Activated naive CD8-positive, alpha-beta T cell treated with anti-CD3 and anti-CD28 coated beads, Interleukin-2, amount 10 ng/mL, durations not matched to agents 7 days and 5 days (primary cell): ENCODE measurements at regions of chr1 and their contacts with region 1.

Region 1: DNA sequence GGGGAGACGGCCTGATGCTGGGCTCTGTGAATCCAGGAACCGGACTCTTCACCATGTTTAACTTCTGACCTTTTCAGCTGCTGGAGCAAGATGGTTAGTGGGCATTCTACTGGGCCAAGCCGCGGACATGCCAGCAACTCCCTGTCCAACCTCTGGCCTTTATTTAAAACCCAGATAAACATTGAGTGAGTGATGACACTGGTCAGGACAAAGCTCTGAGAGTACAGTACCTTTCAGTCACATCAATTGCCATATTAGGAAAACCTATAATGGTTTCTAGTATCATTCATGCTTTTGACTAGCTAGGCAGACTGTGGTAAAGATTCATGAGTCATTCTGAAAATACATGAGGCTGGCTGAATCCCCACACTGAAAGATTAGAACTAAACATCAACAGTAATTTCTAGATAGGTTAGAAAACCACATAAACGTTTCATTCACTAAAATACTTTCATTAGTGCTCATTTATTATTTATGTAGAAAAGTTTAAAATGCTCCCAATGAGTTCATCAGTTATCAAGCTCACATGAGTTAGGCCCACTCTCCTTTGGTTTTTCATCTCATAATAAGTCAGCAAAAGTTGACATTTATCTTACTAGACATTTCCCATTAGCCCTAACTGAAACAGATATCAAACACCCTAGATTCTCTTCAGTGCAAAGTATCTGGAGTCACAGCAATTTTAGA is 7.1 kb upstream of the ACTA1 start:
- DNase-seq: no peak
- ATAC-seq: peak; percentile 94
- H3K4me3 Mint-ChIP-seq: peak overlapping the region; percentile 64
- H3K27ac Mint-ChIP-seq: peak overlapping the region; percentile 60
- H3K4me1 Mint-ChIP-seq: peaks cover 23% of the 10 kb centered on the region
- H3K27me3 Mint-ChIP-seq: peaks cover 10% of the 10 kb centered on the region

Region 2: GRCh38 chr1:229410692-229411443 is 30.1 kb before region 1 on chr1:
- POLR2A ChIA-PET with region 1: interaction called, 12 read pairs
- DNase-seq: peak; percentile 44
- ATAC-seq: peak; percentile 65
- H3K4me3 Mint-ChIP-seq: peak overlapping the region; percentile 75
- H3K27ac Mint-ChIP-seq: peak overlapping the region; percentile 71
- H3K4me1 Mint-ChIP-seq: peaks cover 22% of the 10 kb centered on the region
- H3K27me3 Mint-ChIP-seq: peaks cover 32% of the 10 kb centered on the region

Region 3: DNA sequence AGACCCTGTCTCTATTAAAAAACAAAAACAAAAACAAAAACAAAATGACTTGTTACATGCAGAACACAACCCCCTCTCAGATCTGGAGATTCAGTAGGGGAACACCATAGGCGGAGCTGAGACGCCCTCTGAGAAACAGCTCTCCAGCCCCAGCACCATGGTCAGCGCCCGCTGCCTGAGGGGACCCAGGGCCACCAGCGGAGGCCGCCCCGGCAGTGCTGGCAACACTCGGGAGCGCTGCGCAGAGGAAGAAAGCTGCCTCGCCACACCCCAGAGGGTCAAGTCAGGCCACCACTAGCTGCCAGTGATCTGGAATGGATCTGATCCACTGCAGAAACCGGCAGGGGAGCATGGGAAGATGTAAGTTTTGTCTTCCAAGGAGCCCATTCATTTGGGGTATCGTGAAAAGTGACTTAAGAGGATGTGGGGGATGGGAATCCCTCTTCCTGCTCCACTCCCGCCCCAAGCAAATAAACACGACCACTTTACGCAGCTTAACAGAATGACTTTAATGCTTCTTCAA is 10.2 kb before region 1 on chr1:
- POLR2A ChIA-PET with region 1: interaction called, 10 read pairs
- DNase-seq: peak; percentile 77
- ATAC-seq: peak; percentile 82
- H3K4me3 Mint-ChIP-seq: peak overlapping the region; percentile 87
- H3K27ac Mint-ChIP-seq: no peak overlapping the region
- H3K4me1 Mint-ChIP-seq: peaks cover 10% of the 10 kb centered on the region
- H3K27me3 Mint-ChIP-seq: peaks cover 84% of the 10 kb centered on the region